ENCODE measurements at regions of chr10 and their contacts with region 1.

Region 1: GRCh38 chr10:15901889-15902288 is 41.6 kb upstream of the MINDY3 start:
- DNase-seq: no peak
- ATAC-seq: no peak
- H3K4me3 ChIP-seq: no peak overlapping the region
- H3K27ac ChIP-seq: no peak overlapping the region
- H3K4me1 ChIP-seq: no peaks in the 10 kb centered on the region
- H3K27me3 ChIP-seq: peaks cover 9% of the 10 kb centered on the region; the same call in 1 of the 2 replicates
- CTCF ChIP-seq: no peak
- POLR2A ChIP-seq: no peak
- RAD21 ChIP-seq: no peak

Region 2: GRCh38 chr10:16519908-16520861 is 618.3 kb after region 1 on chr10:
- CTCF ChIA-PET with region 1: interaction called, 10 read pairs
- POLR2A ChIA-PET with region 1: no interaction called
- RAD21 ChIA-PET with region 1: no interaction called
- intact Hi-C with region 1: no loop called
- DNase-seq: no peak
- ATAC-seq: no peak
- H3K4me3 ChIP-seq: no peak overlapping the region
- H3K27ac ChIP-seq: no peak overlapping the region
- H3K4me1 ChIP-seq: no peaks in the 10 kb centered on the region
- H3K27me3 ChIP-seq: no peaks in the 10 kb centered on the region
- CTCF ChIP-seq: no peak
- POLR2A ChIP-seq: no peak
- RAD21 ChIP-seq: no peak

Region 3: GRCh38 chr10:16545116-16545736 is 643.3 kb after region 1 on chr10:
- CTCF ChIA-PET with region 1: interaction called, 4 read pairs
- POLR2A ChIA-PET with region 1: no interaction called
- RAD21 ChIA-PET with region 1: no interaction called
- intact Hi-C with region 1: loop called (anchors 2 kb)
- DNase-seq: peak; percentile 6
- ATAC-seq: peak; percentile 72
- H3K4me3 ChIP-seq: no peak overlapping the region
- H3K27ac ChIP-seq: no peak overlapping the region
- H3K4me1 ChIP-seq: no peaks in the 10 kb centered on the region
- H3K27me3 ChIP-seq: no peaks in the 10 kb centered on the region
- CTCF ChIP-seq: peak; percentile 27 to 74 (median 70); a peak in 5 of 6 replicates
- POLR2A ChIP-seq: no peak
- RAD21 ChIP-seq: peak; percentile 50

Region 4: GRCh38 chr10:16809074-16809718 is 907.3 kb after region 1 on chr10:
- CTCF ChIA-PET with region 1: interaction called, 8 read pairs
- POLR2A ChIA-PET with region 1: no interaction called
- RAD21 ChIA-PET with region 1: no interaction called
- intact Hi-C with region 1: loop called (anchors 10 kb)
- DNase-seq: peak; percentile 31
- ATAC-seq: peak; percentile 93
- H3K4me3 ChIP-seq: no peak overlapping the region
- H3K27ac ChIP-seq: no peak overlapping the region
- H3K4me1 ChIP-seq: no peaks in the 10 kb centered on the region
- H3K27me3 ChIP-seq: no peaks in the 10 kb centered on the region
- CTCF ChIP-seq: peak; percentile 46 to 75 (median 67); a peak in 4 of 6 replicates
- POLR2A ChIP-seq: no peak
- RAD21 ChIP-seq: peak; percentile 54